ENCODE measurements at regions of chr5 and their contacts with region 1.

Region 1: GRCh38 chr5:90434116-90434714 is 24.7 kb upstream of the CETN3 start:
- DNase-seq: peak; percentile 65
- H3K4me3 Mint-ChIP-seq: no peak overlapping the region
- H3K27ac Mint-ChIP-seq: no peak overlapping the region
- H3K4me1 Mint-ChIP-seq: no peaks in the 10 kb centered on the region
- H3K27me3 Mint-ChIP-seq: peaks cover 5% of the 10 kb centered on the region

Region 2: GRCh38 chr5:90264689-90265544 is 169.3 kb before region 1 on chr5:
- CTCF ChIA-PET with region 1: no interaction called
- intact Hi-C with region 1: loop called (anchors 5 kb)
- DNase-seq: peak; percentile 73
- H3K4me3 Mint-ChIP-seq: no peak overlapping the region
- H3K27ac Mint-ChIP-seq: no peak overlapping the region
- H3K4me1 Mint-ChIP-seq: peaks cover 2% of the 10 kb centered on the region
- H3K27me3 Mint-ChIP-seq: peaks cover 7% of the 10 kb centered on the region

Region 3: GRCh38 chr5:90386099-90386710 is 48.0 kb before region 1 on chr5:
- CTCF ChIA-PET with region 1: no interaction called
- intact Hi-C with region 1: loop called (anchors 2 kb)
- DNase-seq: no peak
- H3K4me3 Mint-ChIP-seq: no peak overlapping the region
- H3K27ac Mint-ChIP-seq: no peak overlapping the region
- H3K4me1 Mint-ChIP-seq: peaks cover 5% of the 10 kb centered on the region
- H3K27me3 Mint-ChIP-seq: peaks cover 4% of the 10 kb centered on the region

Region 4: DNA sequence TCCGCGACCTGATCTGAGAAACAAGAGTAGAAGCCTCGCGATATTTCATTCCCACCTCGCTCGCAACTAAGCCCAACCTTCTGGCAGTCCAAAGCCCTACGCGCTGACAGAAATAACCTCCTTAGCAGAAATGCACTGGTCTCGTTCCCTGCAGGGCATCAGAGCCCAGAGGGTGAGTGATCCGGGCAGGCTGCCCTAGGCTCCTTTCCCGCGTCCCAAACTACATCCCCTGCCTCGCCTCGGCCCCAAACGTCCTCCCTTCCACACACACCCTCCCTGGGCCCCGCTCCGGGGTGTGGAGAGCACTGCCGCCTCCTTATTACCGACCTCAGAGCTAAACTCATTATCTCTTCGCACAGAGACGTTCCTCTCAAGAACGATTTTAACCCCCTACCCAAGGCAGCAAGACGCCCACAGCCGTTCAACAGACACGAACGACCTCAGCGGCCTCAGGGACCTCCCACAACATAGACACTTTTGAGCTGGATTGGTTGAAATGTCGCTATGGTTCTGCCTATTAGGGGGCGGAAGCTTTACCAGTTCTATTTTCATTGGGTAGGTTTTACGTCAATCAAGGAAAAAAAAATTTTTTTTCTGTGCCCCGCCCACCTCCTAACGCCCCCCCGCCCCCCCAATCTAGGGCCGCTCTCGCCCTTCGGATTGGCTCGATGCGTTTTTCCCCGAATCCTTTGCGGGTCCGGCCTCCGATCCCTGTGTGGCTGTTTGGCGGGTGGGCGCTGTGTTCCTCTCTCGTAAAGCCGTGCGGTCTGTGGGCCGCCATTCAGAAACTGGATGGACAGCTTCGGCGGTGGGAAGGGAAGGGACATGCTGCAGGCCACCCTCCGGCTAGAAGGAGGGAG is 24.7 kb before region 1 on chr5 and contains the start of gene CETN3:
- CTCF ChIA-PET with region 1: interaction called, 5 read pairs
- intact Hi-C with region 1: loop called (anchors 2 kb)
- DNase-seq: peak; percentile 93
- H3K4me3 Mint-ChIP-seq: no peak within 1 kb of the TSS
- H3K27ac Mint-ChIP-seq: no peak within 1 kb of the TSS
- H3K4me1 Mint-ChIP-seq: peaks cover 15% of the 10 kb centered on the region
- H3K27me3 Mint-ChIP-seq: no peaks in the 10 kb centered on the region
- total RNA-seq, gene CETN3: 41.9 to 45.3 TPM

Region 5: GRCh38 chr5:90606539-90606938 is 172.3 kb after region 1 on chr5:
- CTCF ChIA-PET with region 1: interaction called, 5 read pairs
- intact Hi-C with region 1: loop called (anchors 1 kb)
- DNase-seq: no peak
- H3K4me3 Mint-ChIP-seq: no peak overlapping the region
- H3K27ac Mint-ChIP-seq: no peak overlapping the region
- H3K4me1 Mint-ChIP-seq: no peaks in the 10 kb centered on the region
- H3K27me3 Mint-ChIP-seq: peaks cover 31% of the 10 kb centered on the region

Region 6: DNA sequence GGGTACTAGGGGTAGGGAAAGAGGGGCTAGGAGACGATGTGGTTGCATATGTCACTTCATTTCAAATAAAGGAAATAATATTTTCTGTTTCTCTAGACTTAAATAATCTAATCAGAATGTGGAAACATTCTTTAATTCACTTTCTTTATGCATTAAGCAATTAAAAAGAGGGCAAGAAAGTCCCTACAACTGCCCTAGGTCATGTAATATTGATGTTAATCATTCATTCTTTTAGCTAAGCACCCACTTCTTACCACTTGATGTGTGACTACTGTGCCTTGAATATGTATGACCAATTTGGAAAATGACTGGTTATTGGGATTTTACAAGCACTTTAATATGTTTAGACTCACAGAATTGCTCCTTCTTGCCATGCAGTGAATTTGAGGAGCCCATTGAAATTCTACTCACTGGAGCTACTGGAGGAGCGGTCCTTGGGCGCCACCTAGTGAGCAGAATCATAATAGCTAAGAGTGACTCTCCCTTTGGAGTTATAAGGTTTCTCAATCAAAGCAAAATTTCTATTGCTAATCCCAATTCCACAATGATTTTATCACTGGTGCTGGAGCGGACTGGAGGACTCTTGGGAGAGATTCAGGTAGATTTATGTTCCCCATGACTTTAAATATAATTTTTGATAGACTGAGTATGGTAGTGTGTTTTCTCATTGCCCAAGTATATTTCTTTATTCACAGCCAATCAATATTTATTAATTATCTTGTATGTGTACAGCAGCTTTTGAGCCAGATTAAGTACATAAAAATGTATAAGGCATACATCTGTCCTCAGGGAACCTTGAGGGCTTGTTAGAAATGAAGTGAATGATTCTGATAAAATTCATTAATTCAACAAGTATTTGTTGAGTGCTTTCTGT is 349.5 kb after region 1 on chr5:
- CTCF ChIA-PET with region 1: interaction called, 5 read pairs
- intact Hi-C with region 1: loop called (anchors 1 kb)
- DNase-seq: peak; percentile 81
- H3K4me3 Mint-ChIP-seq: no peak overlapping the region
- H3K27ac Mint-ChIP-seq: no peak overlapping the region
- H3K4me1 Mint-ChIP-seq: no peaks in the 10 kb centered on the region
- H3K27me3 Mint-ChIP-seq: peaks cover 4% of the 10 kb centered on the region

Measured in activated naive CD4-positive, alpha-beta T cell treated with anti-CD3 and anti-CD28 coated beads for 36 hours (primary cell).